Ascending aorta (tissue), 2 donors: ENCODE measurements at regions of chr15 and their contacts with region 1.

Region 1: DNA sequence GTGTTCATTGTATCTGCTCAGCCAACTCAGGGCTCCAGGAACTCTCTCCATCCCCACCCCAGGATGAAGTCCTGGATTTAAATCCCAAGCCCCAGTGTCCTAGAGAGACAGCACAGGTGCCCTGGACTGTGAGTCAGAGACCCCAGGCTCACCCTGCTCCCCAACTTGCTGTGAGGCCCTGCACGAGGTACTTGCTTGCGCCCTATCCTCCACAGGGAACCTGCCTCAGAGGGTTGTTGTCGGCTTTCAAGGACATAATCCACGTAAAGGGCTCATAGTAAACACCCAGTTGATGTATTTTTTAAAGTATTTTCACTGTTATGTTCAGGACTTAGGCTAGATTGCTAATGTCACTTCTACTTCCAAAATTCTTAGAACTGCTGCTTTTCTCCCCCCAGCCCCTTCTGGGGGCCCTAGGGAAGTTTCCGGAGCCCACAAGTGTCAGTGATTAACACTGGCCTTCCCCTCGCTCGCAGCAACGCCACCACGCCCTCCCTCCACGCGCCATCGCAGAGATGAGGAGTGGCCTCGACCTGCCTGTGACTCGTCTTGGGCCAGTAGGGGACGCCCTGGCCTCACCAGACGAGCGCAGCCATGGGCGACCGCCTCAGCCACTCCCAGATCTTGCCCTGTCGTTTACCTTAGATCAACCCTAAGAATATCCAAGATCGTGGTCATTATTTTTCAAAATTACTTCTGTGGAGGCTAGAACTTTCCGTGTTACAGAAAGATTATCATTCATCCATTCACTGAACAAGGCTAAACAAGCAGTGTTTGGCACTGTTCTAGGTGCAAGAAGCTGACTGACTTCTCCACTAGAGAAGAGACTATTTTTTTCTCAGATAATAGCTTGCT is 6.0 kb upstream of the SRP14 start:
- DNase-seq: peak; percentile 73 to 93
- H3K4me3 ChIP-seq: peak overlapping the region in 1 of 2 donors; percentile 24
- H3K27ac ChIP-seq: peak overlapping the region in 1 of 2 donors; percentile 21
- H3K4me1 ChIP-seq: peaks cover 0 to 10% of the 10 kb centered on the region in 2 donors
- H3K27me3 ChIP-seq: no peaks in the 10 kb centered on the region
- CTCF ChIP-seq: peak; percentile 90 to 99 (median 94)

Region 2: DNA sequence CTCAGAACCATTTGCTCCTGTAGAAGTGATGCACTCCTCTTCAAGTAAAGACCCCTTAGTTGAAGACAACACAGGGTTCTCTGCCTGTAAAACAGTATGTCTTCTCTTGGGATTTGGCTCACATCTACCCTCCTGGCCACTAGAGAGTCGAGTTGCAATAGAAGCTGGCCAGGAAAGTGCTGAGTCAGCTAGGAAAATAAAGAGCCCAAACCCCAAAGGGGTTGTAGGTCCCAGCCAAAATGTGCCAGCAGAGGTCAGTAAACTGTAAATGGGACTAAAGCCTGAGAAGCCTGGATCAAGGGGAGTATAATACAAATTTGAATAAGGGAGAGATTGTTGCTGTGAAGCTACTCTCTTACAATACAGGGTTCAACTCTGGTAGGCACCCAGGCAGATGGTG is 501.3 kb before region 1 on chr15:
- intact Hi-C with region 1: no loop called
- DNase-seq: no peak
- H3K4me3 ChIP-seq: no peak overlapping the region
- H3K27ac ChIP-seq: no peak overlapping the region
- H3K4me1 ChIP-seq: peaks cover 0 to 2% of the 10 kb centered on the region in 2 donors
- H3K27me3 ChIP-seq: no peaks in the 10 kb centered on the region
- CTCF ChIP-seq: no peak

Region 3: DNA sequence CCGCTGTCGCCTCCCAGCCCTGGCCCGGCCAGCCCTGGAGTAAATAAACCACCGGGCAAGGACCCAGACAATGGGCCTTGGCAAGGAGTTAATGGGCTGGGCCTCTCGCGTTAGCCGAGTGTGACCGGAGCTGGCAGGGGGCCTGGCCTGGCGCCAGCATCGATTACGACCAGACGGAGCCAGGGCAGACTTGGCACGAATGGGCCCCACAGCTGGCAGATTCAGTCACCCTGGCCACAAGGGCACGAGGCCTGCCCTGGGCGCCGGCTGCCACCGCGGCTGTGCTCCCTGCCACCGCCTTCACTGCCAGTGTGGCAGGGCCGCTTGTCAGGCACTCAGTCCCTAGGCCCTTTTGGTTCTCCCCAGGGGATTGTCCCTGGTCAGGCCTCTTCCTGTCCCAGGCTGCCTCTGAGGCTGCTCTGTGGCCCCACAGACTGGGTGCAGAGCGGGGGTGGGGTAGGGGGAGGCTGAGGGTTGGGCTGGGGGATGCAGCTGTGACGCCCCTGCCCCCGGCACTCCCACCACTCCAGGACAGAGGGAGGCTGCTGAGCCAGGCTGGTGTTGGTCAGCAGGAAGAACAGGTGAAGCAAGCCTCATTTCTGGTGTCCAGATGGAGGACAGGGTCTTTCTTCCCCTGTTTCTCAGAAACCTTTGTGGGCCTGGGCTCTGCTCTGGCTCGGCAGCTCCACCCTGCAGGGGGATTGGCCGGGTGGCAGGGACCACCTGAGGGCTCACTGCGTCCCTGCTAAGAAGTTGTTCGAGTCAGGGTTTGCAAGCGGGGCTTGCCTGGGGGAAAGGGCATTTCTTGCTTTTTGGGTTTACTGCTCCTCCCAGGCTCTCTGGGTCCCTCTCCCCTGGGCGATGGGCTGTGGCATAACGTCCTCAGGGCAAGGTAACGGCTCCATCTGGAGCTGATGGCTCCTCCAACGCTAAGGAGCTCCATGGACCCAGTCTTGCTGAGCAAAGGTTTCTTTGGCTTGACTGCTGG is 24.5 kb after region 1 on chr15:
- intact Hi-C with region 1: loop called (anchors 2 kb)
- DNase-seq: peak; percentile 65 to 97
- H3K4me3 ChIP-seq: no peak overlapping the region
- H3K27ac ChIP-seq: peak overlapping the region; percentile 75 to 79
- H3K4me1 ChIP-seq: peaks cover 7 to 16% of the 10 kb centered on the region in 2 donors
- H3K27me3 ChIP-seq: no peaks in the 10 kb centered on the region
- CTCF ChIP-seq: no peak

Region 4: GRCh38 chr15:40160689-40161688 is 116.0 kb after region 1 on chr15 and contains the start of gene BUB1B:
- intact Hi-C with region 1: loop called (anchors 2 kb)
- DNase-seq: peak; percentile 74 to 95
- H3K4me3 ChIP-seq: peak within 1 kb of the TSS; percentile 47 to 65
- H3K27ac ChIP-seq: no peak within 1 kb of the TSS
- H3K4me1 ChIP-seq: peaks cover 3 to 5% of the 10 kb centered on the region in 2 donors
- H3K27me3 ChIP-seq: no peaks in the 10 kb centered on the region
- CTCF ChIP-seq: no peak
- total RNA-seq, gene BUB1B: not detected

Region 5: DNA sequence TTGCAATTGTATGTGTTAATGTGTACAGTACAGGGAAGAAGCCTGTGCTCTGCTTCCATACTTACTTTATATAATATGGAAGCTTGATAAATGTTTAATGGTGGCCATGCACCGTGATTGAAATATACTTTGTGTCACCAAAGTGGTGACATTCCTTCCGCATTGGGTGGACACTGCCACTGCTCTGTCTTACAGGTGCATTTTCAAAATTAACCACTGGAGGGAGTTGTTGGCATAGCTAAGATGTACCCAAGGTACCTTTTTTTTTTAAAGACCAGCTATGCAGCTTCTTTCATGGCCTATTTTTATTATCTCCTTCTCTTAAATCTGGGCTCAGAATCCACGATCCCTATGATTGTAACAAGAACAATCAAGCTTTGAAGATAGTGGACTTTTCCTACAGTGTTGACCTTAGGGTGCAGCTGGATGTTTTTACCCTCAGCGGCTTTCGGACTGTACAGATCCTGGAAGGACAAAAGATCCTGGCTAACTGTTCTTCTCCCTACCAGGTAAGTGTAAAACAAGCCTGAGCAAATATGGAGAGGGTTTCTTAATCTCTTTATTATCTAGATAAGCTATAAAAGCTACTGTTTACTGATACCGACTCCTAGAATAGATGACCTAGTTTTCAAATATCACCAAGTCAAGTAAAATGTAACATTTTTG is 172.3 kb after region 1 on chr15:
- intact Hi-C with region 1: loop called (anchors 5 kb)
- DNase-seq: no peak
- H3K4me3 ChIP-seq: no peak overlapping the region
- H3K27ac ChIP-seq: no peak overlapping the region
- H3K4me1 ChIP-seq: no peaks in the 10 kb centered on the region
- H3K27me3 ChIP-seq: no peaks in the 10 kb centered on the region
- CTCF ChIP-seq: peak; percentile 83 to 87 (median 85)

Region 6: DNA sequence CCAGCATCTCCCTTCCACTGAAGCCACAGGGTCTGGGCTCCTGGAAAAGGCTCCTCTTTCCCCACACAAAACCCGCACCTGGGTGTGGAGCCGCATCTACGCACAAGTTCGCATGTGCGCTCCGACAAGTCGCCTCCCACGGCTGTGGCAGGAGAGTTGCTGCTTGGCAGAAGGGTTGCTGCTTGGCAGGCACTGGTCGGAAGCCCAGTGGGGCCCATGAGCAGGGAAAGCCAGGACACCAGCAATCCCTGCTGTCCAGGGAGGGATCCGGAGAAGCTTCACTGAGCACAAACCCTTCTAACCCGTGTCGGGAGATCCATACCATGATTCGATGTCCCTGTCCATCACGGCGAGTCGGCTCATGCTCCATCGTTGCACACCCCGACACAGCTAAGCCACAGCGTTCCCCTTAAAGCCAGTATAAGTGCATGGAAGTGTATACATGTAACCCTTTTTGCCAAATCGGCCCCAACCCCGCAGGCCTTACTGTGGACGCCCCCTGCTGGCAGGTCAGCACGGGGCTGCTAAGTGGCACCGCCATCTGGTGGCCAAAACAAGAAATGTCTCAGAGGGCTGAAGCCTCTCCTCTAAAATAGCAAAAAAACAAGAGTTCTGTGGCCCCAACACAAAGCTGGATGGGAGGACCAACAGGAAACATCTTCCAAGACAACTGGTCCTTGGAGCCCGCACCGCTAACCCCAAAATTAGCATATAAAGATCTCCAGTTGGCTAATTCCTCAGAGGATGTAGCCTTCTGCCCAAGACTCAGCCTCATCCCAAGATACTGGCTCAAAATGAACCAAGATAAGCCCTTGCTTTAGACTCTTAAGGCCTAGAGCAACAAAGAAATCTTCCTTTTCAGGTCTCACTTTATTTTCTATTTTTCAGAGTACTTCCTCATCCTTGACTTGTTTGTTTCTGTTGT is 229.7 kb after region 1 on chr15:
- intact Hi-C with region 1: loop called (anchors 1 kb)
- DNase-seq: peak; percentile 31 to 89
- H3K4me3 ChIP-seq: no peak overlapping the region
- H3K27ac ChIP-seq: no peak overlapping the region
- H3K4me1 ChIP-seq: peaks cover 2% of the 10 kb centered on the region in 2 donors
- H3K27me3 ChIP-seq: peaks cover 2% of the 10 kb centered on the region
- CTCF ChIP-seq: peak; percentile 100

Region 7: GRCh38 chr15:40793216-40793989 is 748.5 kb after region 1 on chr15:
- intact Hi-C with region 1: no loop called
- DNase-seq: no peak
- H3K4me3 ChIP-seq: no peak overlapping the region
- H3K27ac ChIP-seq: no peak overlapping the region
- H3K4me1 ChIP-seq: no peaks in the 10 kb centered on the region
- H3K27me3 ChIP-seq: no peaks in the 10 kb centered on the region
- CTCF ChIP-seq: no peak